ENCODE measurements at regions of chr9 and their contacts with region 1.

Region 1: GRCh38 chr9:126558051-126558665 is 55.6 kb upstream of the LMX1B start:
- H3K4me3 ChIP-seq: no peak overlapping the region
- H3K27ac ChIP-seq: no peak overlapping the region
- H3K4me1 ChIP-seq: no peaks in the 10 kb centered on the region
- CTCF ChIP-seq: peak; percentile 48

Region 2: GRCh38 chr9:126456441-126457174 is 101.5 kb before region 1 on chr9:
- CTCF ChIA-PET with region 1: no interaction called
- POLR2A ChIA-PET with region 1: no interaction called
- H3K4me3 ChIP-seq: no peak overlapping the region
- H3K27ac ChIP-seq: no peak overlapping the region
- H3K4me1 ChIP-seq: no peaks in the 10 kb centered on the region
- CTCF ChIP-seq: no peak

Region 3: DNA sequence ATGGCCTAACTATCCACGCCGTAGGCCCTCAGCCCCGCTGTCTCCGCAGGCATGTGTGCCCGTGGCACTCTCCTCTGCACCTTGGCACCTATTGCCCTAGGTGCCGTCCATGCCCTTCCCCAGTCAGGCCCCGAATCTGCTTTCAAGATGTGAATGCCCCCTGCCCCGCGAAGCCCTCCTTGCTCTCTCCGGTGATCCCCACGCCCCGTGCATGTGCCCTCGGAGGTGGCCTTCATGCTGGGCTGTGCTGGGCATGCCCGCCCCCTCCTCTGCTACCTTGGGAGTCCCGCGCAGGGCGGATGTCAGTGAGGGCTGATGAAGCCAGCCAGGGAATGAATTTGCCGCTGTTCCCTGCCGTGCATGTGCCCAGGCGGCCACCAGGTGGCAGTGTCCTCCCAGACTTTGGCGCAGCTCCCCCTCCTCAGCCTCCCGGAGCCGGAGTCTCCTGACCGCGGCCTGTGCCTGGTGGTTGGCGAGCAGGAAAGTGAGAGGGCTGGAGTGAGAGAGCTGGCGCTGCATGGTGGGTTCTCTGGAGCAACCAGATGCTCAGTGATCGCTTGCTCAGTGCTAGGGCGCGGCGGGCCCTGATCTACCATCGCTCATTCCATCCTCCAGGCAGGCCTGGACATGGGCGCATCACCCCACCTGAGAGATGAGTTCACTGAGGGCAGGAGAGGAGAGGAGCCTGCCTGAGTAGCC is 57.3 kb before region 1 on chr9:
- CTCF ChIA-PET with region 1: interaction called, 184 read pairs
- POLR2A ChIA-PET with region 1: interaction called, 4 read pairs
- H3K4me3 ChIP-seq: no peak overlapping the region
- H3K27ac ChIP-seq: no peak overlapping the region
- H3K4me1 ChIP-seq: no peaks in the 10 kb centered on the region; the same call in 1 of the 2 replicates
- CTCF ChIP-seq: peak; percentile 93

Region 4: GRCh38 chr9:126514047-126514821 is 43.9 kb before region 1 on chr9:
- CTCF ChIA-PET with region 1: interaction called, 62 read pairs
- POLR2A ChIA-PET with region 1: interaction called, 3 read pairs
- H3K4me3 ChIP-seq: peak overlapping the region; percentile 5
- H3K27ac ChIP-seq: no peak overlapping the region
- H3K4me1 ChIP-seq: peaks cover 12% of the 10 kb centered on the region
- CTCF ChIP-seq: no peak

Region 5: GRCh38 chr9:126538550-126538949 is 19.6 kb before region 1 on chr9:
- CTCF ChIA-PET with region 1: interaction called, 10 read pairs
- POLR2A ChIA-PET with region 1: no interaction called
- H3K4me3 ChIP-seq: no peak overlapping the region
- H3K27ac ChIP-seq: no peak overlapping the region
- H3K4me1 ChIP-seq: no peaks in the 10 kb centered on the region
- CTCF ChIP-seq: no peak

Region 6: GRCh38 chr9:126781186-126782052 is 223.3 kb after region 1 on chr9:
- CTCF ChIA-PET with region 1: interaction called, 16 read pairs
- POLR2A ChIA-PET with region 1: interaction called, 3 read pairs
- H3K4me3 ChIP-seq: no peak overlapping the region
- H3K27ac ChIP-seq: no peak overlapping the region
- H3K4me1 ChIP-seq: no peaks in the 10 kb centered on the region
- CTCF ChIP-seq: peak; percentile 72; the same call in 1 of the 2 replicates

Measured in HEK293 (cell line).